ENCODE measurements at regions of chr6 and their contacts with region 1.

Region 1: DNA sequence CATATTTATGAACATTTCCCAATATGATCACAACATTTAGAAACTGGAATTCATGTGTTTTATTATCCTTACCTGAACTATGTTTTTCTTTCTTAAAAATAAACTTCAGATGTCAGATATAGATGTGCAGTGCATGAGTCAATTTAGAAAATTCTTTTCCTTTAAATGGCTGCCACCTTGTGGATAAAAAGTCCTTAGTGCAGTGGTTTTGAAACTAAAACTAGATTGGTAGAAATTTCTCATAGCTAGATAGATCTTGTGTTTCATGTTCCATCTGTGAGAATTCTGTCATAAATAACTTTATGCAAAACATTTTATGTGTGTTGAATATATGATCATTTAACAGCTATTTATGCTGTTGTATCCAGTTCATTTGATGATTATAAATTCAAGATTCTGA is 134.9 kb downstream of the KLHL32 start:
- DNase-seq: peak; percentile 37
- ATAC-seq: peak; percentile 76
- H3K4me3 ChIP-seq: no peak overlapping the region
- H3K27ac ChIP-seq: no peak overlapping the region
- H3K4me1 ChIP-seq: no peaks in the 10 kb centered on the region
- H3K27me3 ChIP-seq: peaks cover 4% of the 10 kb centered on the region
- CTCF ChIP-seq: peak; percentile 60
- POLR2A ChIP-seq: no peak
- RAD21 ChIP-seq: peak; percentile 64

Region 2: DNA sequence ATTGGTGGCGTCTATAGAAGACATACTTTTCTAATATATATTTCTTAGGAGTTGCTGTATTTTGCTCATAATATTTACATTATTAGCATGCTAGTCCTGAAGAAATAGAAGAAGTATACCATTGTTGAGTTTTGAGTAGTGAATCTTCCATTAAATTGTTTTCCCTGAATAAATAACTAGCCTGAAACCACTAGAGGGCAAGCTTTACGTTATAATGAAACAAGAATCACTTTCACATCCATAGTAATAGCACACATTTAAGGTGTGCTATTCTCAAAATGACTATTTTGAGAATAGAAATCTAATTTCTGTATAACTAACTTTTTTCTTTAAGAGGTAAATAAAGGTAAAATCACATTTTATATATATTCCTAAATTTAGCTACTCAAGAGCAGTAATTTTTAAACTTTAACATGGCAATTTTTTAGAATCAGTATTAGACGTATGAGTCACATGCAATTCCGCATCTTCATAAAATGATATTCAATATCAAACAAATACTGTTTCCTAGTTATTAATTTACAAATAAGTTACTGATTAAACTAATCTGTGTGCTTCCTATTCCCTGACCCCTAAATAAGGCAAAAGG is 1695.4 kb before region 1 on chr6:
- CTCF ChIA-PET with region 1: no interaction called
- POLR2A ChIA-PET with region 1: no interaction called
- dilution Hi-C with region 1: no loop called
- in situ Hi-C with region 1: loop called (anchors 25 kb)
- intact Hi-C with region 1: loop called (anchors 10 kb)
- DNase-seq: peak; percentile 10
- ATAC-seq: peak; percentile 27; the same call in 1 of the 2 replicates
- H3K4me3 ChIP-seq: no peak overlapping the region
- H3K27ac ChIP-seq: no peak overlapping the region
- H3K4me1 ChIP-seq: no peaks in the 10 kb centered on the region
- H3K27me3 ChIP-seq: no peaks in the 10 kb centered on the region
- CTCF ChIP-seq: peak; percentile 48
- POLR2A ChIP-seq: no peak
- RAD21 ChIP-seq: peak; percentile 41

Region 3: GRCh38 chr6:96460052-96460700 is 599.3 kb before region 1 on chr6:
- CTCF ChIA-PET with region 1: no interaction called
- POLR2A ChIA-PET with region 1: no interaction called
- dilution Hi-C with region 1: no loop called
- in situ Hi-C with region 1: no loop called
- intact Hi-C with region 1: no loop called
- DNase-seq: no peak
- ATAC-seq: no peak
- H3K4me3 ChIP-seq: no peak overlapping the region
- H3K27ac ChIP-seq: no peak overlapping the region
- H3K4me1 ChIP-seq: no peaks in the 10 kb centered on the region
- H3K27me3 ChIP-seq: no peaks in the 10 kb centered on the region
- CTCF ChIP-seq: no peak
- POLR2A ChIP-seq: no peak
- RAD21 ChIP-seq: no peak

Region 4: DNA sequence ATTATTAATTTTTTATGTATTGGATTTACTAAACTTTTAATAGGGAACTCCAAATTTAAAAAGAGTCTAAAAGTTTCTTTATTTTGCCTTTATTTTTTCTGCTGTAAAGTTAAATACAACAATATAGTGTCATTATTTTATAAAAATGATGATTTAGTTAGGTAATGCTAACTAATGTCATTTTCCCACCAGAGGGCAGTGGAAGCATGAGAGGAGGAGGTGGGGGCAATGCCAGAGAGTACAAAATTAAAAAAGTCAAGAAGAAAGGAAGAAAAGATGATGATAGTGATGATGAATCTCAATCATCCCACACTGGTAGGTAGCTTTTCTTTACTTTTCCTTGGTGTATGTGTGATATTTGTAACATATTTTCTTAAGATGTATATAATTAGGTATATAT is 516.8 kb before region 1 on chr6:
- CTCF ChIA-PET with region 1: no interaction called
- POLR2A ChIA-PET with region 1: no interaction called
- dilution Hi-C with region 1: no loop called
- in situ Hi-C with region 1: no loop called
- intact Hi-C with region 1: loop called (anchors 10 kb)
- DNase-seq: no peak
- ATAC-seq: no peak
- H3K4me3 ChIP-seq: no peak overlapping the region
- H3K27ac ChIP-seq: no peak overlapping the region
- H3K4me1 ChIP-seq: no peaks in the 10 kb centered on the region
- H3K27me3 ChIP-seq: no peaks in the 10 kb centered on the region
- CTCF ChIP-seq: peak; percentile 33
- POLR2A ChIP-seq: no peak
- RAD21 ChIP-seq: peak; percentile 38; the same call in 1 of the 2 replicates

Region 5: GRCh38 chr6:96626759-96627364 is 432.6 kb before region 1 on chr6:
- CTCF ChIA-PET with region 1: interaction called, 4 read pairs
- POLR2A ChIA-PET with region 1: no interaction called
- dilution Hi-C with region 1: no loop called
- in situ Hi-C with region 1: loop called (anchors 5 kb)
- intact Hi-C with region 1: loop called (anchors 1 kb)
- DNase-seq: peak; percentile 38
- ATAC-seq: peak; percentile 85
- H3K4me3 ChIP-seq: no peak overlapping the region
- H3K27ac ChIP-seq: no peak overlapping the region
- H3K4me1 ChIP-seq: no peaks in the 10 kb centered on the region
- H3K27me3 ChIP-seq: no peaks in the 10 kb centered on the region
- CTCF ChIP-seq: peak; percentile 52
- POLR2A ChIP-seq: no peak
- RAD21 ChIP-seq: peak; percentile 53

Region 6: GRCh38 chr6:97026298-97026697 is 33.2 kb before region 1 on chr6:
- CTCF ChIA-PET with region 1: no interaction called
- POLR2A ChIA-PET with region 1: no interaction called
- dilution Hi-C with region 1: no loop called
- in situ Hi-C with region 1: no loop called
- intact Hi-C with region 1: no loop called
- DNase-seq: no peak
- ATAC-seq: no peak
- H3K4me3 ChIP-seq: no peak overlapping the region
- H3K27ac ChIP-seq: no peak overlapping the region
- H3K4me1 ChIP-seq: no peaks in the 10 kb centered on the region
- H3K27me3 ChIP-seq: no peaks in the 10 kb centered on the region
- CTCF ChIP-seq: no peak
- POLR2A ChIP-seq: no peak
- RAD21 ChIP-seq: no peak

Region 7: DNA sequence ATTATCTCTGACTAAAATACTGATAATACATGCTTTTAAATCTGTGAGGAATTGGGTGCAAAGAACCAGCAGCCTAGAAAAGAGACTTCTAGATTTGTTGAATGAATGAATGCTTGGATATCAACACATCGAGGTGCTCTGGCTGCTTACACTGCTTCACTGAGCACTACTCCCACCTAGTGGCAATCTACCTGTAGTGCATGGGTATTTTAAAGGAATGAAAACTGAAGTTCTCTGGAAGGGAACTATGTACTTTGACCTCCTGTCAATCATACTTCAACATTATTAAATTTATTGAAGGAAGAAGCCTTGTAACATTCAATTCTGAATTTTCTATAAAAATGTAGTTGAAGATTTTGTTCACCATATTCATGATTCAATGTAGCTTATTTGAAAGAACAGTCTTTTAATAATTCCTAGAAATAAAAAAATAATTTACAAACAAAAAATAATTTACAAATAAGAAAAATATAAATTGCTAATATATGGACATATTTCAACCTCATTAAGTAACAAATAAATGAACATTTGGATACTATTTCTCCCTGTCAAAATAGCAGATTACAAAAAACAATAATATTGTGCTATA is 334.8 kb after region 1 on chr6:
- CTCF ChIA-PET with region 1: no interaction called
- POLR2A ChIA-PET with region 1: no interaction called
- dilution Hi-C with region 1: no loop called
- in situ Hi-C with region 1: loop called (anchors 25 kb)
- intact Hi-C with region 1: no loop called
- DNase-seq: peak; percentile 57
- ATAC-seq: peak; percentile 86
- H3K4me3 ChIP-seq: no peak overlapping the region
- H3K27ac ChIP-seq: no peak overlapping the region
- H3K4me1 ChIP-seq: no peaks in the 10 kb centered on the region
- H3K27me3 ChIP-seq: peaks cover 3% of the 10 kb centered on the region
- CTCF ChIP-seq: peak; percentile 91
- POLR2A ChIP-seq: no peak
- RAD21 ChIP-seq: peak; percentile 94

Region 8: DNA sequence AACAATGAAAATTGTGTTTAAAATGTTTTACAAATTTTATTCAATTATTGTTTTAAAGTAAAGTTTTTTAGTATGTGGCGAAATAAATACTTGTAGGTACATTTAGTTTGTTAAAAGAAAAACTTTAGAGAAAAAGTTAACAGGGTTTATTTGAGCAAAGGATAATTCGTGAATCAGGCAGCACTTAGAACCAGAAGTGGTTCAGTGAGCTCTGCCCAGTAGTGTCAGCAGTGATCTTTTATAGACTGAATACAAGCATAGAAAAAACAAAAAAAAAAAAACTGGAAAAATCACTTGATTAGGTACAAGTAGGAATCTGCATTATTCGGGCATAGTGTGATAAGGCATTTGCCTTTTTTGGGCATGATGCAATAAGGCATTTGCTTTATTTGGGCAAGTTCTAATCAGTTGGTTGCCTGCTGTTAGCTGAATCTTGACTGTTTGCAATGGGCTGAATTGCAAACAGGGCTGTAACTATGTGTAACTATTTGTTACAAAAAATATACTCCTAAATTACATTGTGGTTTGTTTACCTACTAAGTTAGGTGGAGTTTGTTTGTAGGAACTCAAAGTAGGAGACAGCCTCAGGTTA is 346.4 kb after region 1 on chr6:
- CTCF ChIA-PET with region 1: no interaction called
- POLR2A ChIA-PET with region 1: no interaction called
- dilution Hi-C with region 1: no loop called
- in situ Hi-C with region 1: no loop called
- intact Hi-C with region 1: no loop called
- DNase-seq: no peak
- ATAC-seq: no peak
- H3K4me3 ChIP-seq: no peak overlapping the region
- H3K27ac ChIP-seq: no peak overlapping the region
- H3K4me1 ChIP-seq: no peaks in the 10 kb centered on the region
- H3K27me3 ChIP-seq: no peaks in the 10 kb centered on the region
- CTCF ChIP-seq: no peak
- POLR2A ChIP-seq: no peak
- RAD21 ChIP-seq: no peak

Measured in IMR-90 (cell line).